GM12878 (cell line): ENCODE measurements at regions of chr2 and their contacts with region 1.

Region 1: DNA sequence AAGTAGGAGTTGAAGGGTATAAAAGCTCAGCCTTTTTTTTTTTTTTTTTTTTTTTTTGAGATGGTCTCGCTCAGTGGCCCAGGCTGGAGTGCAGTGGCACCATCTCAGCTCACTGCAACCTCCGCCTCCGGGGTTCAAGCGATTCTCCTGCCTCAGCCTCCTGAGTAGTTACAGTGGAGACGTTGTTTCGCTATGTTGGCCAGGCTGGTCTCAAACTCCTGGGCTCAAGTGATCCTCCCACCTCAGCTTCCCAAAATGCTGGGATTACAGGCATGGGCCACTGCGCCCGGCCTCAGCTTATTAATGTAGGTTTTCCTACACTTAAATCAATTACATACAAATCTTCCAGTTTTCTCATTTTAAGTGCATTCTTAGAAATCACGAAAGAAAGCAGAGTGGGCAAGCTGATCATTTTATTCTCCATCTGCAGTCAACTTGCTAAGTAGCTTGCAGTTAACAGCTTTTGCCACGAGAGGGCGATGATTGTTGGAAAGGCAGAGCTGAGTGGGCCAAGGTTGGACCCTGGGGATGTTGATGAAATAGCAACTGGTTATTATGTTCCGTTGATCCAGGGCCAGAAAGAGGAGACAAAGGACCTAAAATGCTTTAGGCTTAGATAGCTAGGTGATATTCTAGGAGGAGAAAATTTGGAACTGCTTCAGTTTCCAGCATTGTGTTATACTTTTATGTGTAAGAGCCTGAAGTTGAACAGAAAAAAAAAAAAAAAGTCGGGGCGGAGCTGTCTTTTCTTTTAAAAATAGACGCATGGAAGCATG is 234.4 kb upstream of the EPAS1 start:
- DNase-seq: no peak
- ATAC-seq: peak; percentile 93
- H3K4me3 ChIP-seq: no peak overlapping the region
- H3K27ac ChIP-seq: no peak overlapping the region
- H3K4me1 ChIP-seq: no peaks in the 10 kb centered on the region
- H3K27me3 ChIP-seq: no peaks in the 10 kb centered on the region
- CTCF ChIP-seq: peak; percentile 79 to 89 (median 83)
- EP300 ChIP-seq: no peak
- POLR2A ChIP-seq: no peak
- RAD21 ChIP-seq: peak; percentile 89

Region 2: GRCh38 chr2:45237850-45238542 is 824.8 kb before region 1 on chr2:
- CTCF ChIA-PET with region 1: no interaction called
- POLR2A ChIA-PET with region 1: no interaction called
- RAD21 ChIA-PET with region 1: no interaction called
- SMC1A ChIA-PET with region 1: no interaction called
- in situ Hi-C with region 1: no loop called
- intact Hi-C with region 1: no loop called
- DNase-seq: no peak
- ATAC-seq: no peak
- H3K4me3 ChIP-seq: no peak overlapping the region
- H3K27ac ChIP-seq: no peak overlapping the region
- H3K4me1 ChIP-seq: no peaks in the 10 kb centered on the region
- H3K27me3 ChIP-seq: no peaks in the 10 kb centered on the region
- CTCF ChIP-seq: no peak
- EP300 ChIP-seq: no peak
- POLR2A ChIP-seq: no peak
- RAD21 ChIP-seq: no peak

Region 3: DNA sequence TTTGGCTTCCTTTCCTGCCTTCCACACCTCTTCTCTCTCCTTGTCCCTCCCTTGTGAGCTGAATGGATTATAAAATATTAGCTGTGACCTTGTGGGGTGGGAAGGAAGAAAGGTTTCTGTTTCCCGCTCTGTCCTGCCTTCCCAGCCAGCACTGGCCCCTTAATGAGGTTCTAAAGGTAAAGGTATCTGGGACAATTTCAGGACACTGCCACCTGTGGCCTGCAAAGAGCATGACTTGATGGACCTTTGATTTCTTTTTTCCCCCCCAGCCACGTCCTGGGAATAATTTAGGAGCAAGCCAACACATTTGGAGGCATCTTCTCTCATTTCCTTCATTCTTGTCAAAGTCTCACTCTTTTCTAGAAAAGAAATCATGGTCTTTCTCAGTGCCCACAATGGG is 12.3 kb before region 1 on chr2:
- CTCF ChIA-PET with region 1: interaction called, 56 read pairs
- POLR2A ChIA-PET with region 1: interaction called, 3 read pairs
- RAD21 ChIA-PET with region 1: no interaction called
- SMC1A ChIA-PET with region 1: interaction called, 18 read pairs
- in situ Hi-C with region 1: no loop called
- intact Hi-C with region 1: no loop called
- DNase-seq: no peak
- ATAC-seq: no peak
- H3K4me3 ChIP-seq: no peak overlapping the region
- H3K27ac ChIP-seq: no peak overlapping the region
- H3K4me1 ChIP-seq: no peaks in the 10 kb centered on the region
- H3K27me3 ChIP-seq: no peaks in the 10 kb centered on the region
- CTCF ChIP-seq: 0 out of 6 replicates have a peak, but pooled peaks of 1 of the 3 experiments have one; percentile 10
- EP300 ChIP-seq: no peak
- POLR2A ChIP-seq: no peak
- RAD21 ChIP-seq: no peak

Region 4: GRCh38 chr2:46091004-46091403 is 28.2 kb after region 1 on chr2:
- CTCF ChIA-PET with region 1: interaction called, 13 read pairs
- POLR2A ChIA-PET with region 1: no interaction called
- RAD21 ChIA-PET with region 1: interaction called, 6 read pairs
- SMC1A ChIA-PET with region 1: interaction called, 4 read pairs
- in situ Hi-C with region 1: no loop called
- intact Hi-C with region 1: no loop called
- DNase-seq: no peak
- ATAC-seq: peak; percentile 68
- H3K4me3 ChIP-seq: no peak overlapping the region
- H3K27ac ChIP-seq: no peak overlapping the region
- H3K4me1 ChIP-seq: no peaks in the 10 kb centered on the region
- H3K27me3 ChIP-seq: no peaks in the 10 kb centered on the region
- CTCF ChIP-seq: peak in 1 of 3 experiments; percentile 7; a peak in 1 of 6 replicates
- EP300 ChIP-seq: no peak
- POLR2A ChIP-seq: no peak
- RAD21 ChIP-seq: no peak; the same call in 1 of the 2 replicates

Region 5: DNA sequence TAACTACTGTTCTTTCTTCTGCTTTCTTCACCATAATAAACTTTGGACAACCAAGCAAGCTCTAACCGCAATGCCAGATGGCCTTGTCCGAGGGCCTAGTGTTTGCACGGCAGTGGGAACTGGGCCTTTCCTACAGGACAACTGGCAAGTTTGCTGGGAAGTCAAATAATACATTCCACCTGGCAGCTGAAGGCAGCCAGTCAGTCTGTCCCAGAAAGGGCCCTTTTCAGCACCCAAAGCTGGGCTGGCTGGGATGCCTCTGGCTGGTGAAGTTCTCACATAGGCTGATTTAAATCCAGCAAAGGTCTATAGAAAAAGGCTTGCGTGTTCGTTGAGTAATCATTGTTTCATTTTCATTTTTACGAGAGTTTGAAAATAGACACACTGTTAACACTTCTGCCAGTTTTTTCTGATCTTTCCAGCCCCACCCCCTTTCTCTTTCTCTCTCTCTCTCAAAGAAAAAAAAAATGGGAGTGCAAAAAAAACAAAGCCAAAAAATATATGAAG is 124.3 kb after region 1 on chr2:
- CTCF ChIA-PET with region 1: interaction called, 11 read pairs
- POLR2A ChIA-PET with region 1: no interaction called
- RAD21 ChIA-PET with region 1: interaction called, 5 read pairs
- SMC1A ChIA-PET with region 1: interaction called, 12 read pairs
- in situ Hi-C with region 1: no loop called
- intact Hi-C with region 1: no loop called
- DNase-seq: peak; percentile 70
- ATAC-seq: peak; percentile 99
- H3K4me3 ChIP-seq: peak overlapping the region; percentile 41
- H3K27ac ChIP-seq: peak overlapping the region; percentile 66
- H3K4me1 ChIP-seq: peaks cover 5% of the 10 kb centered on the region
- H3K27me3 ChIP-seq: no peaks in the 10 kb centered on the region
- CTCF ChIP-seq: no peak
- EP300 ChIP-seq: peak in 1 of 2 experiments; percentile 20; a peak in 1 of 4 replicates
- POLR2A ChIP-seq: no peak
- RAD21 ChIP-seq: no peak

Region 6: GRCh38 chr2:46320141-46320567 is 257.3 kb after region 1 on chr2:
- CTCF ChIA-PET with region 1: interaction called, 14 read pairs
- POLR2A ChIA-PET with region 1: no interaction called
- RAD21 ChIA-PET with region 1: interaction called, 6 read pairs
- SMC1A ChIA-PET with region 1: interaction called, 5 read pairs
- in situ Hi-C with region 1: no loop called
- intact Hi-C with region 1: no loop called
- DNase-seq: no peak
- ATAC-seq: no peak
- H3K4me3 ChIP-seq: no peak overlapping the region
- H3K27ac ChIP-seq: no peak overlapping the region
- H3K4me1 ChIP-seq: no peaks in the 10 kb centered on the region
- H3K27me3 ChIP-seq: no peaks in the 10 kb centered on the region; a peak in 1 of 4 replicates
- CTCF ChIP-seq: no peak
- EP300 ChIP-seq: no peak
- POLR2A ChIP-seq: no peak
- RAD21 ChIP-seq: no peak

Region 7: DNA sequence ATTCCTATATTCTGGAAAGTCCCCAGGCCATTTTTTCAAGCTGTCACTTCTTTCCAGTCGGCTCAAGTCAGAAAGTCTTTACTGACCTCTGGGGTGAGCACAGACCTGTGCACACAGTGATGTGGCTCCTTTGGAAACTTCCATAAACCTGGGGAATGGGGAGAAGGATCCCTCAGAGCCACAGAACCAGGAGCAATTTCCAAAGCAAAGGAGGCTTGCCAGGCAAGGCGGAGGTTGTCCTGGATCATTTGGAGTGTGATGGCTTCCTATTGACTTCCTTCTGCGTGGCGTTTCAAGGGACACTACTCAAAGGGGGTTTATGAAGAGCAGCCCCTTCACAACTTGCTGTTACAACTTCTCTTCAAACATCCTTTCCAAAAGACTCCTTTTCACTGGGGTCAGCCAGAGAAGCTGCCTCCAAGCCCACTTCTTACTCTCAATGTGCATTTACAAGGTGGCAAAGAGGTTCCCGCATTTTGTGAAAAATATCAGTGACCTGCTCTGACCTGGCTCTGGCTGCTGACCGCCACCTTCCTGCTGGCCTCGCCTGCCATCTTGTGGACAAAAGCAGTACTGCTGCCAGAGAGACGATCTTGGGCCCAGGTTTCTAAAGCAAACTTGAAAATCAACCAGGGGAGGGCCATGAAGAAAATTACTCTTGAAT is 398.3 kb after region 1 on chr2:
- CTCF ChIA-PET with region 1: interaction called, 61 read pairs
- POLR2A ChIA-PET with region 1: no interaction called
- RAD21 ChIA-PET with region 1: interaction called, 10 read pairs
- SMC1A ChIA-PET with region 1: interaction called, 23 read pairs
- in situ Hi-C with region 1: no loop called
- intact Hi-C with region 1: loop called (anchors 1 kb)
- DNase-seq: peak; percentile 39
- ATAC-seq: peak; percentile 85
- H3K4me3 ChIP-seq: no peak overlapping the region; the same call in 1 of the 2 replicates
- H3K27ac ChIP-seq: 0 out of 2 replicates have a peak overlapping the region, but pooled peaks have one; percentile 0
- H3K4me1 ChIP-seq: peaks cover 18% of the 10 kb centered on the region
- H3K27me3 ChIP-seq: no peaks in the 10 kb centered on the region; a peak in 1 of 4 replicates
- CTCF ChIP-seq: peak; percentile 97 to 99 (median 99); a peak in 5 of 6 replicates
- EP300 ChIP-seq: no peak
- POLR2A ChIP-seq: no peak
- RAD21 ChIP-seq: peak; percentile 96